ENCODE measurements at regions of chr7 and their contacts with region 1.

Region 1: GRCh38 chr7:79176859-79177477 is 276.5 kb downstream of the MAGI2 start:
- DNase-seq: peak in 1 of 2 experiments; percentile 42
- H3K4me3 ChIP-seq: no peak overlapping the region
- H3K4me3 Mint-ChIP-seq: no peak overlapping the region
- H3K27ac Mint-ChIP-seq: no peak overlapping the region
- H3K4me1 ChIP-seq: no peaks in the 10 kb centered on the region; the same call in 1 of the 2 replicates
- H3K4me1 Mint-ChIP-seq: peaks cover 7% of the 10 kb centered on the region
- H3K27me3 ChIP-seq: no peaks in the 10 kb centered on the region
- H3K27me3 Mint-ChIP-seq: no peaks in the 10 kb centered on the region
- CTCF ChIP-seq: peak; percentile 66 to 72

Region 2: DNA sequence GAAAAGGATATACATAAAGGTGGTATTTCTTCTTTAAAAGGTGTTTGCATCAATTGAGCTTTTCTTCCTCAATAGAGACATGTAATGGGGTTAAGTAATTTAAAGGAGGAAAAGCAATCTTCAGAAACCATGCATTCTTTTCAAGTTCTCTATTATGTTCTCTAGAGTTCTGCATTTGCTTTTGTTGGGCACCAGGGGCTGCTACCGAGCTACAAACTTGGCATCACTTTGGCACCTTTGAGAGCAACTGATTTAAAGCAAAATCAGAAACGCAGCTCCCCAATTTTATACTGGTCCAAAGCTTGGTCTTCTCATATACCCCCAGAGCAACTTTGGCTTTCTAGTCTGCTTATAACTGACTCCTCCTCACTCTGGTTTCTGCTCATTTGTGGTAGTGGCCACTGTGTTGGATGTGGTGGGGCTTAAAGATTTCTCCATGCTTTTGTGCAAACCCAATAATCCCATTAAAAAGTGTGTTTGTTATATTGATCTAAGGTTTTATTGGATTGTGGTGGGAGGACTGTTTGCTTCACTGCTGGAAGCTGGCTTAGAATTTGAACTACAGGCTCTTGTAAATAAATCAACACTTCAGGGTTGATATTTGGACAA is 666.3 kb before region 1 on chr7:
- CTCF ChIA-PET with region 1: no interaction called
- POLR2A ChIA-PET with region 1: no interaction called
- intact Hi-C with region 1: loop called (anchors 1 kb)
- DNase-seq: peak in 1 of 2 experiments; percentile 34
- H3K4me3 ChIP-seq: no peak overlapping the region
- H3K4me3 Mint-ChIP-seq: no peak overlapping the region
- H3K27ac Mint-ChIP-seq: no peak overlapping the region
- H3K4me1 ChIP-seq: no peaks in the 10 kb centered on the region
- H3K4me1 Mint-ChIP-seq: no peaks in the 10 kb centered on the region
- H3K27me3 ChIP-seq: no peaks in the 10 kb centered on the region
- H3K27me3 Mint-ChIP-seq: peaks cover 11% of the 10 kb centered on the region
- CTCF ChIP-seq: peak; percentile 58 to 76

Region 3: GRCh38 chr7:78587443-78588044 is 589.4 kb before region 1 on chr7:
- CTCF ChIA-PET with region 1: no interaction called
- POLR2A ChIA-PET with region 1: no interaction called
- intact Hi-C with region 1: loop called (anchors 1 kb)
- DNase-seq: peak in 1 of 2 experiments; percentile 42
- H3K4me3 ChIP-seq: no peak overlapping the region
- H3K4me3 Mint-ChIP-seq: no peak overlapping the region
- H3K27ac Mint-ChIP-seq: no peak overlapping the region
- H3K4me1 ChIP-seq: no peaks in the 10 kb centered on the region
- H3K4me1 Mint-ChIP-seq: no peaks in the 10 kb centered on the region
- H3K27me3 ChIP-seq: no peaks in the 10 kb centered on the region; the same call in 1 of the 2 replicates
- H3K27me3 Mint-ChIP-seq: peaks cover 3% of the 10 kb centered on the region
- CTCF ChIP-seq: peak; percentile 40 to 55

Region 4: GRCh38 chr7:78607099-78607498 is 569.9 kb before region 1 on chr7:
- CTCF ChIA-PET with region 1: no interaction called
- POLR2A ChIA-PET with region 1: no interaction called
- intact Hi-C with region 1: loop called (anchors 5 kb)
- DNase-seq: peak in 1 of 2 experiments; percentile 7
- H3K4me3 ChIP-seq: no peak overlapping the region
- H3K4me3 Mint-ChIP-seq: no peak overlapping the region
- H3K27ac Mint-ChIP-seq: no peak overlapping the region
- H3K4me1 ChIP-seq: no peaks in the 10 kb centered on the region
- H3K4me1 Mint-ChIP-seq: no peaks in the 10 kb centered on the region
- H3K27me3 ChIP-seq: no peaks in the 10 kb centered on the region
- H3K27me3 Mint-ChIP-seq: no peaks in the 10 kb centered on the region
- CTCF ChIP-seq: peak; percentile 45 to 48

Region 5: DNA sequence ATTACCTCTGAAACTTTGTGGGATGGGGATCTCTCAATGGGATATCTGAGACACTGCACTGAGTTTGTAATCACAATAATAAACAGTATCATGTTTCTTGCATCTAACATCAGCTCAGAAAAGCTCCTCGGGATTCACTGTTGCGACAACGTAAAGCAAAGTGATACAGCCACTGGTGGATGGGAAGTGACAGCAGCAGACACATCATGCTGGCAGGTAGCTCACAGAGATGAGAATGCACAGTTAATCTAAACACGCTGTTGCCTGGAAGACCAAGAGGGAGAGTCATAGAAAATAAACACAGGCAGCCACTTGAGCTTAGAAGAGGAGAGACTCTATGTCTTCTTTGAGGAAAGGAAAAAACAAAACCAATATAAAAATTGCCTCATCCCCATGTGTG is 237.3 kb before region 1 on chr7:
- CTCF ChIA-PET with region 1: no interaction called
- POLR2A ChIA-PET with region 1: no interaction called
- intact Hi-C with region 1: loop called (anchors 5 kb)
- DNase-seq: no peak
- H3K4me3 ChIP-seq: no peak overlapping the region
- H3K4me3 Mint-ChIP-seq: no peak overlapping the region
- H3K27ac Mint-ChIP-seq: no peak overlapping the region
- H3K4me1 ChIP-seq: no peaks in the 10 kb centered on the region
- H3K4me1 Mint-ChIP-seq: no peaks in the 10 kb centered on the region
- H3K27me3 ChIP-seq: no peaks in the 10 kb centered on the region
- H3K27me3 Mint-ChIP-seq: no peaks in the 10 kb centered on the region
- CTCF ChIP-seq: no peak

Region 6: GRCh38 chr7:78953726-78954363 is 223.1 kb before region 1 on chr7:
- CTCF ChIA-PET with region 1: no interaction called
- POLR2A ChIA-PET with region 1: no interaction called
- intact Hi-C with region 1: loop called (anchors 5 kb)
- DNase-seq: no peak
- H3K4me3 ChIP-seq: no peak overlapping the region
- H3K4me3 Mint-ChIP-seq: no peak overlapping the region
- H3K27ac Mint-ChIP-seq: no peak overlapping the region
- H3K4me1 ChIP-seq: no peaks in the 10 kb centered on the region
- H3K4me1 Mint-ChIP-seq: no peaks in the 10 kb centered on the region
- H3K27me3 ChIP-seq: no peaks in the 10 kb centered on the region
- H3K27me3 Mint-ChIP-seq: peaks cover 12% of the 10 kb centered on the region
- CTCF ChIP-seq: no peak

Region 7: DNA sequence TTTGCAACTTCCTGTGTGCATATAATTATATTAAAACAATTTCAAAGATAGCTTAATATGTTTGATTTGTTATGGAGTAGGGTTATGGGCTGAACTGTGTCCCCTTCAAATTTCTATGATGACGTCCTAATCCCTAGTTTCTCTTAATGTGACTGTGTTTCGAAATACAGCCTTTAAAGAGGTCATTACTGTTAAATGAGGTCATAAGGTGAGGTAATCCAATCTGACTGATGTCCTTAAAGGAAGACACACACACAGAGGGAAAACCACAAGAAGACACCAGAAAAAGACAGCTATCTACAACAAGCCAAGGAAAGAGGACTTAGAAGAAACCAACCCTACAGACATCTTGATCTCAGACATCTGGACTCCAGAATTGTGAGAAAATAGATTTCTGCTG is 130.9 kb before region 1 on chr7:
- CTCF ChIA-PET with region 1: no interaction called
- POLR2A ChIA-PET with region 1: no interaction called
- intact Hi-C with region 1: loop called (anchors 10 kb)
- DNase-seq: no peak
- H3K4me3 ChIP-seq: no peak overlapping the region
- H3K4me3 Mint-ChIP-seq: no peak overlapping the region
- H3K27ac Mint-ChIP-seq: no peak overlapping the region
- H3K4me1 ChIP-seq: no peaks in the 10 kb centered on the region
- H3K4me1 Mint-ChIP-seq: no peaks in the 10 kb centered on the region
- H3K27me3 ChIP-seq: no peaks in the 10 kb centered on the region; the same call in 1 of the 2 replicates
- H3K27me3 Mint-ChIP-seq: peaks cover 4% of the 10 kb centered on the region
- CTCF ChIP-seq: no peak

Region 8: GRCh38 chr7:79118143-79118542 is 58.8 kb before region 1 on chr7:
- CTCF ChIA-PET with region 1: no interaction called
- POLR2A ChIA-PET with region 1: no interaction called
- intact Hi-C with region 1: no loop called
- DNase-seq: no peak
- H3K4me3 ChIP-seq: no peak overlapping the region
- H3K4me3 Mint-ChIP-seq: no peak overlapping the region
- H3K27ac Mint-ChIP-seq: no peak overlapping the region
- H3K4me1 ChIP-seq: no peaks in the 10 kb centered on the region
- H3K4me1 Mint-ChIP-seq: no peaks in the 10 kb centered on the region
- H3K27me3 ChIP-seq: no peaks in the 10 kb centered on the region
- H3K27me3 Mint-ChIP-seq: peaks cover 3% of the 10 kb centered on the region
- CTCF ChIP-seq: no peak

Region 9: DNA sequence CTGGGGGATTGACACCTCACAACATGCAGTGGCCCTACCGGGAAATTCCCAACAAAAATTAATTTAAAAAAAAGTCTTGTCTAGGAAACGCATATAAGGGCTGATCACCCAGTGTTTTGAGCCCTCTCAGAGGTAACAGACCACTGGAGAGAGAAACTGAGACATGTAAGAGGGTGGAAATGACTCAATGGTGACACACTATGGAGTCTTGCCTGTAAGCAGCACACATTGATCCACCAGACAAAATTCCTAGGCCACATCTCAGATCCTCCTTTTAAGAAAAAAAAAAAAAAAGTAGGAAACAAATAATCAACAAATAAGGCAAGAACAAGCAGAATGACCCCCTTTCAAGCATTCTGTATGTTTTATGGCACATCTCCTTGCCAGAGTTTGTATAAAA is 19.7 kb before region 1 on chr7:
- CTCF ChIA-PET with region 1: no interaction called
- POLR2A ChIA-PET with region 1: no interaction called
- intact Hi-C with region 1: no loop called
- DNase-seq: no peak
- H3K4me3 ChIP-seq: no peak overlapping the region
- H3K4me3 Mint-ChIP-seq: no peak overlapping the region
- H3K27ac Mint-ChIP-seq: no peak overlapping the region
- H3K4me1 ChIP-seq: no peaks in the 10 kb centered on the region
- H3K4me1 Mint-ChIP-seq: no peaks in the 10 kb centered on the region
- H3K27me3 ChIP-seq: no peaks in the 10 kb centered on the region
- H3K27me3 Mint-ChIP-seq: no peaks in the 10 kb centered on the region
- CTCF ChIP-seq: no peak

Region 10: GRCh38 chr7:79245623-79246249 is 68.8 kb after region 1 on chr7:
- CTCF ChIA-PET with region 1: no interaction called
- POLR2A ChIA-PET with region 1: no interaction called
- intact Hi-C with region 1: no loop called
- DNase-seq: no peak
- H3K4me3 ChIP-seq: no peak overlapping the region
- H3K4me3 Mint-ChIP-seq: no peak overlapping the region
- H3K27ac Mint-ChIP-seq: no peak overlapping the region
- H3K4me1 ChIP-seq: no peaks in the 10 kb centered on the region
- H3K4me1 Mint-ChIP-seq: no peaks in the 10 kb centered on the region
- H3K27me3 ChIP-seq: no peaks in the 10 kb centered on the region
- H3K27me3 Mint-ChIP-seq: peaks cover 5% of the 10 kb centered on the region
- CTCF ChIP-seq: peak in 1 of 2 experiments; percentile 14

Measured in Caco-2 (cell line).